Posterior vena cava (tissue), 2 donors: ENCODE measurements at regions of chr6 and their contacts with region 1.

Region 1: GRCh38 chr6:11675601-11676000 is 103.0 kb downstream of the ADTRP start:
- DNase-seq: no peak

Region 2: GRCh38 chr6:11732036-11732631 is 56.5 kb after region 1 on chr6:
- intact Hi-C with region 1: loop called in 1 of 2 experiments (anchors 2 kb)
- DNase-seq: peak; percentile 93

Region 3: GRCh38 chr6:11744753-11745152 is 69.2 kb after region 1 on chr6:
- intact Hi-C with region 1: no loop called
- DNase-seq: peak; percentile 88

Region 4: DNA sequence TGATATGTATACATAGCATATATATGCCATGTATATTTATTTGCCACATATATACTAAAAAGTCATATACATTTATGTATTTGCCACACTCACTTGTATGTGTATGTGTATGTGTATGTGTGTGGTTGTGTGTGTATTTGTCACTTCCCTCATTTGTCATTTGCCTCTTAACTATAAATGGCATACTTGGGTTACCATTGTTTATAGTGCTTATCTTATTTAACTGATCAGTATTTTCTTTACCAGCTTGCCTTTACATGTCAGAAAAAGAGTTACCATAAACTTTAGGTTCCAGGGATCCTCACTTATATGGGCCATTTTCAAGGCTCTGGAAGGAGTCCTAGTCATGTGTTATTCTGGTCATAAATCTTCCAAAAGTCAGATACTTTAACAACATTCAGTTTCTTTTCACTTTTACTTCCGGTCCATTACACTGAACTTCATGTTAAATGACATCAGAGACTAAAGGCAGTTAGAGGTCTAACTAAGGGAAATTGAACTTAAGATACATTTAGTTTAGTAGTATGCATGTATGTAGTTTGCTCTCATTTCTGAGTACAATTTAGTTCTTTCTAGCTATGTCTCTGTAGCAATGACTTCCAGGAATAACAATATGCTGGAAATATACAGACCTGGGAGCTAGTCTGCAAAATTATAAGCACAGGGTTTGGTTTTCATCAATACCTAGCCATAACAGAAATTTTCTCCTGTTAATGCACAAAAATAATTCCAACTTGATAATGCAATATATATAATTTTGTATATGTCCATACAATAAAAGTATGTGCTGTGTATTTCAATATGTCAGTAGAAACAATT is 302.8 kb after region 1 on chr6:
- intact Hi-C with region 1: no loop called
- DNase-seq: no peak